Activated CD4-positive, alpha-beta memory T cell treated with anti-CD3 and anti-CD28 coated beads, Interleukin-2, amount 10 ng/mL, durations not matched to agents 7 days and 5 days (primary cell): ENCODE measurements at regions of chr1 and their contacts with region 1.

Region 1: GRCh38 chr1:231040019-231040799 is at the start of gene FAM89A:
- DNase-seq: peak; percentile 75
- H3K4me3 Mint-ChIP-seq: peak within 1 kb of the TSS; percentile 73
- H3K27ac Mint-ChIP-seq: no peak within 1 kb of the TSS
- H3K4me1 Mint-ChIP-seq: peaks cover 30% of the 10 kb centered on the region
- H3K27me3 Mint-ChIP-seq: peaks cover 22% of the 10 kb centered on the region
- total RNA-seq, gene FAM89A: 6.8 to 6.9 TPM

Region 2: DNA sequence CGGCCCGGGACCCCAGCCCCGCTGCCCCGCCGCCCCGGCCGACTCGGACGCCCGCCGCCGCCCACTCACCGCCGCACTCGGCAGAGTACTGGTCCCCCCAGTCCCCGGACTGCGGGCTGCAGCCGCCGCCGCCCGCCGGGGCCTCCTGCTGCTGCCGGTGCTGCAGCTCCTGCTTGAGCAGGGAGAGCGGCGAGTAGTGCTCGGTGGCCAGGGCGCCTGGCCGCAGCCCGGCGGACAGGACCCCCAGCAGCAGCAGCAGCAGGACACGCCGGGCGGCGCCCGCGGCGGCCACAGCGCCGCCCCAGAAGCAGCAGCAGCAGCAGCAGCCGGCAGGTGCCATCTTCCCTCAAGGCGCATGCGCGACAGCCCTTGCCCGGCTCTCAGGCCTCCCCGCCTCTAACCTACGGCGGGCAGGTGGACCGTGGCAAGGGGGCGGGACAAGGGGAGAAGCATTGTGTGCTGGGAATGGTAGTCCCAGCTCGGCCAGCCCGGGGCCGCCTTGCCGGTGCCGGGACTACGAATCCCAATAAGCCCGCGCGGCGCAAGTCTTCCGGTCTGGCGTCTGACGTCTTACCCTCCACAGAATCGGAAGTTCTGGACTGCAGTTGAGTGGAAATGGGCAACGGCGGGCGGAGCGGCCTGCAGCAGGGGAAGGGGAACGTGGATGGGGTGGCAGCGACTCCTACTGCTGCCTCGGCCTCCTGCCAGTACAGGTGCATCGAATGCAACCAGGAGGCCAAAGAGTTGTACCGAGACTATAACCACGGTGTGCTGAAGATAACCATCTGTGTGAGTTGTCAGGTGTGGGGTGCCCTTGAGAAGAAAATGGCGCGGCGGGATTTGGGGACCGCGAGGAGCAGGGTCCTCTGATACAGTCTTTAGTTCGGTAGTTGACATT is 61.5 kb before region 1 on chr1 and contains the starts of genes ARV1 and TTC13:
- CTCF ChIA-PET with region 1: interaction called, 3 read pairs
- POLR2A ChIA-PET with region 1: interaction called, 18 read pairs
- DNase-seq: peak; percentile 98
- H3K4me3 Mint-ChIP-seq: peak within 1 kb of the TSS; percentile 96
- H3K27ac Mint-ChIP-seq: peak within 1 kb of the TSS; percentile 98
- H3K4me1 Mint-ChIP-seq: peaks cover 34% of the 10 kb centered on the region
- H3K27me3 Mint-ChIP-seq: no peaks in the 10 kb centered on the region
- total RNA-seq, gene ARV1: 13.2 to 15.3 TPM
- total RNA-seq, gene TTC13: 42.0 to 46.0 TPM

Region 3: GRCh38 chr1:230992100-230992774 is 48.0 kb before region 1 on chr1:
- CTCF ChIA-PET with region 1: no interaction called
- POLR2A ChIA-PET with region 1: no interaction called
- DNase-seq: no peak
- H3K4me3 Mint-ChIP-seq: no peak overlapping the region
- H3K27ac Mint-ChIP-seq: no peak overlapping the region
- H3K4me1 Mint-ChIP-seq: no peaks in the 10 kb centered on the region
- H3K27me3 Mint-ChIP-seq: no peaks in the 10 kb centered on the region